ENCODE measurements at regions of chr1 and their contacts with region 1.

Region 1: DNA sequence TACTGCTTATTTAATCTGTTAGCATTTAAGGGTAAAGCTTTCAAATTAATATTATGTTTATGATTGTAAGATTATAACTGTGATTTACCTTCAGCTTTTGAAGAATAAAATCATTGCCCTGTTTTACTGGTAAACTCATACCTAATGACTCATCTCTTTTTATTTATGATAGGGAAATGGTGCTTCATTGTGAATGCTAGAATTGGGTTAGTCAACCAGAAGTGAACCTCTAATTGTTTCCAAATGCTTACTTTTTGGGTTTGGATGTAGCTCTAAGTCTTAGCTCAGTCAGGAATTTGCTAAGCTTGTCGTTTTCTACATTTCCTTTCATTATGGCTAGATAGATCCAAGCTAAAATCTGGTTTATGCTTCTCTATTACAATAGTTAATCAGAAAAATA is 59.4 kb downstream of the SLC30A7 start:
- DNase-seq: no peak
- H3K4me3 ChIP-seq: no peak overlapping the region
- H3K4me3 Mint-ChIP-seq: peak overlapping the region in 1 of 8 donors; percentile 26
- H3K27ac ChIP-seq: no peak overlapping the region
- H3K27ac Mint-ChIP-seq: no peak overlapping the region
- H3K4me1 ChIP-seq: peaks cover 25% of the 10 kb centered on the region
- H3K4me1 Mint-ChIP-seq: peaks cover 38 to 60% (median 43%) of the 10 kb centered on the region in 4 donors
- H3K27me3 ChIP-seq: no peaks in the 10 kb centered on the region
- H3K27me3 Mint-ChIP-seq: no peaks in the 10 kb centered on the region

Region 2: DNA sequence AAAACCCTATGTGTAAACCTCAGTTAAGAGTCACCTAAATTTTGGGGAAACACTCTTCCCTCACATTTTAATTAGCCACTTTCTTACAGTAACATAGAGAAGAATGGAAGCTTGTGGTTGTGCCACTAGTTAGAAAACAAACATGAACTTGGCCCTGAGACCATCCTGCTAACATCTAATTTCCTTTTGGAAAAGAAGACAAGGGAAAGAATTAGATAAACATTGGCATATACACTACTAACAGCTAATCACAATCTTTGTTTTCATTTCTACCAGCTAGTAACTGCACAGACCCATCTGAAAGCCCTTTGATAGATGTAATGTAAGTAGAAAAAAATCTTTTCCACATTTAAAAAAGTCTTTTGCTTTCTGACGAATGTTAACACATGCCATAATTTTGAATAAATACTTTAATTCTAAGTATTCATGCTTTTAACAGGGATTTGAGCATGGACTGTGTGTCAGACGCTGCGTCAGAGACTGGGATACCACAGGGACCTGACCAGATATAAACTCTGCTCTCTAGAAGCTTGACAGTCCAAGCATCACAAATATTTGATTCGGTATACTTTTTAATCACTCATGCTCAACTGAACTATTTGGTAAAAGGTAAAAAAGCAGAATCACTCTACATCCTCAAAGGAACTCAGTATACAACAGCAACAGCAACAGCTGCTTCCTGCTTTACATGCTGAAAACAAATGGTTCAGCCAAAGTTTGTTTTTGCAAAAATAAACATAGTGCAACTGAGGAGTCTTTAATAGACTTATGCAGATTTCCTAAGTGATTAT is 40.1 kb after region 1 on chr1:
- CTCF ChIA-PET with region 1: interaction called, 6 read pairs
- POLR2A ChIA-PET with region 1: interaction called, 4 read pairs
- intact Hi-C with region 1: loop called (anchors 5 kb)
- DNase-seq: peak in 2 of 5 donors; percentile 3 to 8
- H3K4me3 ChIP-seq: no peak overlapping the region
- H3K4me3 Mint-ChIP-seq: peak overlapping the region in 4 of 8 donors; percentile 11 to 43 (median 41)
- H3K27ac ChIP-seq: no peak overlapping the region
- H3K27ac Mint-ChIP-seq: peak overlapping the region in 6 of 7 donors; percentile 18 to 87 (median 62)
- H3K4me1 ChIP-seq: peaks cover 21% of the 10 kb centered on the region
- H3K4me1 Mint-ChIP-seq: peaks cover 17 to 27% (median 23%) of the 10 kb centered on the region in 4 donors
- H3K27me3 ChIP-seq: no peaks in the 10 kb centered on the region
- H3K27me3 Mint-ChIP-seq: no peaks in the 10 kb centered on the region

Region 3: DNA sequence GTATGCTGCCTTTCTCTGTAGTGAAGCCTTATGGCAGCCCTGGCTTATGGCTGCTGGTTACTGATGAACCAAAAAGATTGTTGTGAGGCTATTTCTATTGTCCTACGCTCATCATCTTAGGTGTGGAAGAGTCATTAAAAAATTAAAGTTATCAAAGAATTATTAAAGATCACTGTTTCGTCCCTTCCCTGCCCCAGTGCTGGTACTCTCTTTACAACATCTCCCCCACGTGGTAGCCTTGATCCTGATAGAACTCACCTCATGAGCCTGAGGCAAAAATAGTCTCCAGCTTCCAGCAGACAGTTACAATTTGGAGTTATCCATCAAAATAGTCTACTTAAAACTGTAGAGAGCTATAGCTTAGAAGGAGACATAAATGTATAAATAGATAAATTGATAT is 483.0 kb after region 1 on chr1:
- CTCF ChIA-PET with region 1: no interaction called
- POLR2A ChIA-PET with region 1: no interaction called
- intact Hi-C with region 1: no loop called
- DNase-seq: peak in 1 of 5 donors; percentile 7
- H3K4me3 ChIP-seq: no peak overlapping the region
- H3K4me3 Mint-ChIP-seq: no peak overlapping the region
- H3K27ac ChIP-seq: no peak overlapping the region
- H3K27ac Mint-ChIP-seq: no peak overlapping the region
- H3K4me1 ChIP-seq: no peaks in the 10 kb centered on the region
- H3K4me1 Mint-ChIP-seq: peaks cover 0 to 3% (median 0%) of the 10 kb centered on the region in 4 donors
- H3K27me3 ChIP-seq: no peaks in the 10 kb centered on the region
- H3K27me3 Mint-ChIP-seq: peaks cover 3 to 5% of the 10 kb centered on the region in 2 donors

Measured in CD4-positive, alpha-beta memory T cell (primary cell).